Panc1 (cell line): ENCODE measurements at regions of chr10 and their contacts with region 1.

Region 1: GRCh38 chr10:89114846-89115625 is 92.1 kb downstream of the CH25H start:
- DNase-seq: no peak
- ATAC-seq: no peak
- H3K4me3 ChIP-seq: no peak overlapping the region
- H3K27ac ChIP-seq: no peak overlapping the region
- H3K4me1 ChIP-seq: no peaks in the 10 kb centered on the region
- H3K27me3 ChIP-seq: no peaks in the 10 kb centered on the region
- CTCF ChIP-seq: no peak

Region 2: DNA sequence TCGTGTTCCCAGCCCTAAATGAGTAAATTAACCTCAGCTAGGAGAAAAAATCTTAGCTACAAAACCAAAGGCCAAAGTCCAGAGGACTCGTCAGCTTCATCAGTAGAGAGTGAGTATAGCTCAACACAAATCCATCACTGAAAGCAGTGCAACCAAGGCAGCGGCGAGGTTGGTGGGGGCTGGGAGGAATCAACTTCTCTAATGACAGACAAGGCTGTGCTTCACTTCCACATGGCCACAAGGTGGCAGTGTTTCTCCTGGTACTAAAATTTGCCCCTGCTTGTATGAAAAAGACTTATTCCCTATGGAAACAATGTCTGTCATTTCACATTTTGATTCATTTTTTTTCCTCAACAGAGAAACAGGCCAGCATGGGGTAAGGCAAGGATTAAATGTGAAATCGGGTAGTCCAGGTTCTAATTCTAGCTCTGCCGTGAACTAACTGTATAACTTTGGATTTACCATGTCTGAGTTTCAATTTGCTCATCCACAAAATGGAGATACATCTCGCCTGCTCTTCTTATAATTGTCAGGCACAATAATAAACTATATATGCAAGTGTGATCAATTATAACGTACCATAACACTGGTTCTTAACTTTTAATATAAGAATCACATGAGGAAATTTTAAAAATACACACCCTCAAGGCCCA is 85.1 kb before region 1 on chr10:
- CTCF ChIA-PET with region 1: no interaction called
- POLR2A ChIA-PET with region 1: no interaction called
- in situ Hi-C with region 1: no loop called
- intact Hi-C with region 1: loop called (anchors 5 kb)
- DNase-seq: peak; percentile 59
- ATAC-seq: peak; percentile 65
- H3K4me3 ChIP-seq: peak overlapping the region in 1 of 2 experiments; percentile 31; a peak in 1 of 4 replicates
- H3K27ac ChIP-seq: no peak overlapping the region
- H3K4me1 ChIP-seq: peaks cover 6% of the 10 kb centered on the region; the same call in 1 of the 2 replicates
- H3K27me3 ChIP-seq: no peaks in the 10 kb centered on the region
- CTCF ChIP-seq: peak; percentile 92

Region 3: GRCh38 chr10:89553064-89553734 is 438.2 kb after region 1 on chr10:
- CTCF ChIA-PET with region 1: no interaction called
- POLR2A ChIA-PET with region 1: no interaction called
- in situ Hi-C with region 1: no loop called
- intact Hi-C with region 1: no loop called
- DNase-seq: peak; percentile 32
- ATAC-seq: peak; percentile 50
- H3K4me3 ChIP-seq: no peak overlapping the region
- H3K27ac ChIP-seq: no peak overlapping the region
- H3K4me1 ChIP-seq: no peaks in the 10 kb centered on the region
- H3K27me3 ChIP-seq: no peaks in the 10 kb centered on the region; the same call in 1 of the 2 replicates
- CTCF ChIP-seq: no peak